Spleen (tissue), 13 donors: ENCODE measurements at regions of chr22 and their contacts with region 1.

Region 1: DNA sequence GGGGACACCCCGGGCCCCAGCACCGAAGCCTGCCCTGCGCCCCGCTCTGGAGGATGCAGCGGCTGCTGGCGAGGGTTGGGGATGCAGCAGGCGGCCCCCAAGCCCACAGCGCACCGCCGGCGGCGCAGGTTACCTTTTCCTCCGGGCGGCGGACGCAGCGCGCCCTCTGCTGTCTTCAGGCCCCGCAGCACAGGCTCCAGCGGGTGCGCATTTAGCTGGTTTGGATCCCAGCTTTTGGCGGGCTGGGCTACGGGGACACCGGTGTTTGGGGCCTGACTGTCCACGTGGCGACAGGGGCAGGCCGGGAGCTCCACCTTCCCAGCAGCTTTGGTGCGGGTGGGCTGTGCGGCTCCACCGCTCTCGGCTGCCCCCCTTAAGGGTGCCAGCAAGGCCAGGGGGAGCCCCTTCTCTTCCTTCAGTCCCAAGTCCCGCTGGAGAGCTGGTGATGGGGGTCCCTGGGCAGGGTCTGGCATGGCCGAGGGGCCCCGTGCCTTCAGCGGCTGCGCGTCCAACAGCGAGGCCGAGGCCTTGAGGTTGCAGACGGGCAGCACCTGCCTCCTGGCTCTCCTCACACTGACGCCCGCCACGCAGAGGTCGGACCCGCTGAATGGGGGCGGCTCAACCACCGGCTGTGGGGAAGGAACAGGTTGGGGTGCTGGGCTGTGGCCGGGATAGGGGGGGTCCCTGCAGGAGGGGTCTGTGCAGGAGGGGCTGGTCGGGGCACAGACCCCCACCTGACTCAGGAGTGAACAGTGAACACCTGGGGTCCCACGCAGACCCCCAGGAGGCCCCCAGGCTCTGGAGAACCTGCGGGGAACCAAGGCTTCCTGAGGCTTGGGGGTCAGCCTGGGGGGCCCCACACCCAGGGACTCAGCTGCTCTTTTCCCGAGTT is 18.0 kb upstream of the IL17REL start:
- DNase-seq: peak; percentile 95
- H3K4me3 ChIP-seq: peak overlapping the region in 2 of 8 donors; percentile 1 to 53
- H3K27ac ChIP-seq: no peak overlapping the region
- H3K4me1 ChIP-seq: peaks cover 0 to 30% (median 14%) of the 10 kb centered on the region in 6 donors
- H3K27me3 ChIP-seq: peaks cover 0 to 71% (median 29%) of the 10 kb centered on the region in 7 donors
- CTCF ChIP-seq: peak; percentile 86 to 96 (median 90)
- POLR2A ChIP-seq: no peak

Region 2: GRCh38 chr22:49767355-49768062 is 263.0 kb before region 1 on chr22:
- intact Hi-C with region 1: loop called (anchors 5 kb)
- DNase-seq: peak; percentile 62
- H3K4me3 ChIP-seq: no peak overlapping the region
- H3K27ac ChIP-seq: no peak overlapping the region
- H3K4me1 ChIP-seq: peaks cover 0 to 10% (median 2%) of the 10 kb centered on the region in 6 donors
- H3K27me3 ChIP-seq: no peaks in the 10 kb centered on the region
- CTCF ChIP-seq: peak; percentile 53 to 89 (median 73)
- POLR2A ChIP-seq: no peak

Region 3: DNA sequence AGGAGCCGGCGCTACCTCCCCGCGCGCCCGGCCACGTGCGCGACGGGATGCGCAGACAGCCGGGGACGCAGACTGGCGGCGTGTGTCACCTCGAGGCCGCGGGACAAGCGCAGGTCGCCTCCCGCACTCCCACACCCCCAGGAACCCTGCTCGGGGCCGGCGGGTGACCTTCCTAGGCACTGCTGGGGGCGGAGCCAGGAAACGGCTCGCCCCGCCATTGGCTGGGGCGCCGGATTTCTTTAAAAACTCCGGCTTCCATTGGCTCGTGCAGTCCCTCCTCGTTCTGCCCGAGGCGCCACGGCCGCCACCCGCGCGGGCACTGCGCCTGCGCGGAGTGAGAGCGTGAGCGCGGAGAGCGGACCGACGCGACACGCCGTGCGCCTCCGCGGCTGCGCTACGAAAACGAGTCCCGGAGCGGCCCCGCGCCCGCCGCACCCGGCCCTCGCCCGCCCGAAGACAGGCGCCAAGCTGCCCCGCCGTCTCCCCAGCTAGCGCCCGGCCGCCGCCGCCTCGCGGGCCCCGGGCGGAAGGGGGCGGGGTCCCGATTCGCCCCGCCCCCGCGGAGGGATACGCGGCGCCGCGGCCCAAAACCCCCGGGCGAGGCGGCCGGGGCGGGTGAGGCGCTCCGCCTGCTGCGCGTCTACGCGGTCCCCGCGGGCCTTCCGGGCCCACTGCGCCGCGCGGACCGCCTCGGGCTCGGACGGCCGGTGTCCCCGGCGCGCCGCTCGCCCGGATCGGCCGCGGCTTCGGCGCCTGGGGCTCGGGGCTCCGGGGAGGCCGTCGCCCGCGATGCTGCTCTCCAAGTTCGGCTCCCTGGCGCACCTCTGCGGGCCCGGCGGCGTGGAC is 70.2 kb before region 1 on chr22 and contains the start of gene PIM3:
- intact Hi-C with region 1: no loop called
- DNase-seq: peak; percentile 97
- H3K4me3 ChIP-seq: peak within 1 kb of the TSS; percentile 71 to 99 (median 92)
- H3K27ac ChIP-seq: peak within 1 kb of the TSS; percentile 73 to 99 (median 97)
- H3K4me1 ChIP-seq: peaks cover 33 to 71% (median 52%) of the 10 kb centered on the region in 6 donors
- H3K27me3 ChIP-seq: no peaks in the 10 kb centered on the region
- CTCF ChIP-seq: peak in 2 of 11 experiments; percentile 17 to 18
- POLR2A ChIP-seq: peak; percentile 34 to 95 (median 71)
- total RNA-seq, gene PIM3: 72.1 to 134 (median 109) TPM